ENCODE measurements at regions of chr11 and their contacts with region 1.

Region 1: GRCh38 chr11:8964324-8965320 is at the start of gene TMEM9B:
- DNase-seq: peak; percentile 95
- ATAC-seq: peak; percentile 85
- H3K4me3 Mint-ChIP-seq: peak within 1 kb of the TSS; percentile 94
- H3K27ac Mint-ChIP-seq: peak within 1 kb of the TSS; percentile 91
- H3K4me1 Mint-ChIP-seq: peaks cover 25% of the 10 kb centered on the region
- H3K27me3 Mint-ChIP-seq: no peaks in the 10 kb centered on the region
- CTCF ChIP-seq: no peak
- total RNA-seq, gene TMEM9B: 14.6 to 16.3 TPM

Region 2: DNA sequence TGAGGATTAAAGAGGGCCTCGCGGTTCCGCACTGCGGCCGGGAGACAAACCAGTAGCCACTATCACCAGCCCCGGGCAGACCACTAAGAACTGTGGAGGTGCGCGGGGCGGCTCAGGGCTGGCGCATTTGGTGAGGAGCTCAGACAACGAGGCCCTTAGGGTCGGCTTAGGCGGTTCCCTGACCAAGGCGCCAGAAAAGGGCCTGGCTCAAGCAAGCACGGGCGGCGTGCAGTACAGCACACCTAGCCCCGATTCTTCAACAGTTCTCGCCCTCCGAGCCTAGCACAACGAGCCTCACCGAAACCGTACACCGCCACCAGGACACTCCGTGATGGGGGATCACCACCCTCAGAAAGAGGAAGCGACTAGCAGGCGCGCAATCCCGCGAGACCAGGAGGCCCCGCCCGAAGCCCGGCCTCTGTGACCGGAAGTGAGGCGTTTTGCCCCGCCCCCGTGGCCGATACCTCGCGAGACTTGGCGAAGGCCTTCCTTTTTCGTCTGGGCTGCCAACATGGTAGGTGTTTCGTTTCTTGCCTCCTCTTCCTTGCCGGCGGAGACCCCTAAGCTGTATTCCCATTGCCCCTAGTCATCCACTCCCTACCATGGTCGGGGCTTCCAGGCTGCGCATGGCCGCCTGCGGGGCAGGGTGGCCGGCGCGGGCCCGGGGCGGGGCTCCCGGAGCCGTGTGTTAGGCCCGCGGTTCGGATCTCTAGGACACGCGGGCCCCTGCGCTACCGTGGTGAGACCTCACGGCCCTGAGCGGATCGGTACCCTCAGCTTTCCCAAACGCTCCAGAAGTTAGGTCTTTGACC is 282.1 kb before region 1 on chr11 and contains the starts of genes RPL27A and TRIM66:
- CTCF ChIA-PET with region 1: interaction called, 3 read pairs
- POLR2A ChIA-PET with region 1: interaction called, 16 read pairs
- intact Hi-C with region 1: loop called (anchors 5 kb)
- DNase-seq: peak; percentile 99
- ATAC-seq: peak; percentile 96
- H3K4me3 Mint-ChIP-seq: peak within 1 kb of the TSS; percentile 93
- H3K27ac Mint-ChIP-seq: peak within 1 kb of the TSS; percentile 97
- H3K4me1 Mint-ChIP-seq: peaks cover 41% of the 10 kb centered on the region
- H3K27me3 Mint-ChIP-seq: no peaks in the 10 kb centered on the region
- CTCF ChIP-seq: no peak
- total RNA-seq, gene RPL27A: 959 to 987 TPM
- total RNA-seq, gene TRIM66: 24.7 to 28.4 TPM

Region 3: GRCh38 chr11:8688414-8689362 is 275.9 kb before region 1 on chr11:
- CTCF ChIA-PET with region 1: interaction called, 5 read pairs
- POLR2A ChIA-PET with region 1: interaction called, 16 read pairs
- intact Hi-C with region 1: loop called (anchors 5 kb)
- DNase-seq: peak; percentile 91
- ATAC-seq: peak; percentile 91
- H3K4me3 Mint-ChIP-seq: peak overlapping the region; percentile 93
- H3K27ac Mint-ChIP-seq: peak overlapping the region; percentile 97
- H3K4me1 Mint-ChIP-seq: peaks cover 45% of the 10 kb centered on the region
- H3K27me3 Mint-ChIP-seq: no peaks in the 10 kb centered on the region
- CTCF ChIP-seq: no peak

Region 4: GRCh38 chr11:8744423-8744822 is 220.2 kb before region 1 on chr11:
- CTCF ChIA-PET with region 1: no interaction called
- POLR2A ChIA-PET with region 1: no interaction called
- intact Hi-C with region 1: no loop called
- DNase-seq: peak; percentile 6
- ATAC-seq: peak; percentile 83
- H3K4me3 Mint-ChIP-seq: no peak overlapping the region
- H3K27ac Mint-ChIP-seq: no peak overlapping the region
- H3K4me1 Mint-ChIP-seq: peaks cover 5% of the 10 kb centered on the region
- H3K27me3 Mint-ChIP-seq: peaks cover 13% of the 10 kb centered on the region
- CTCF ChIP-seq: no peak

Region 5: GRCh38 chr11:8911029-8911826 is 53.4 kb before region 1 on chr11 and contains the start of gene AKIP1:
- CTCF ChIA-PET with region 1: interaction called, 43 read pairs
- POLR2A ChIA-PET with region 1: interaction called, 6 read pairs
- intact Hi-C with region 1: loop called (anchors 5 kb)
- DNase-seq: peak; percentile 90
- ATAC-seq: peak; percentile 80
- H3K4me3 Mint-ChIP-seq: peak within 1 kb of the TSS; percentile 84
- H3K27ac Mint-ChIP-seq: peak within 1 kb of the TSS; percentile 88
- H3K4me1 Mint-ChIP-seq: peaks cover 42% of the 10 kb centered on the region
- H3K27me3 Mint-ChIP-seq: no peaks in the 10 kb centered on the region
- CTCF ChIP-seq: no peak
- total RNA-seq, gene AKIP1: 27.8 to 28.2 TPM

Region 6: DNA sequence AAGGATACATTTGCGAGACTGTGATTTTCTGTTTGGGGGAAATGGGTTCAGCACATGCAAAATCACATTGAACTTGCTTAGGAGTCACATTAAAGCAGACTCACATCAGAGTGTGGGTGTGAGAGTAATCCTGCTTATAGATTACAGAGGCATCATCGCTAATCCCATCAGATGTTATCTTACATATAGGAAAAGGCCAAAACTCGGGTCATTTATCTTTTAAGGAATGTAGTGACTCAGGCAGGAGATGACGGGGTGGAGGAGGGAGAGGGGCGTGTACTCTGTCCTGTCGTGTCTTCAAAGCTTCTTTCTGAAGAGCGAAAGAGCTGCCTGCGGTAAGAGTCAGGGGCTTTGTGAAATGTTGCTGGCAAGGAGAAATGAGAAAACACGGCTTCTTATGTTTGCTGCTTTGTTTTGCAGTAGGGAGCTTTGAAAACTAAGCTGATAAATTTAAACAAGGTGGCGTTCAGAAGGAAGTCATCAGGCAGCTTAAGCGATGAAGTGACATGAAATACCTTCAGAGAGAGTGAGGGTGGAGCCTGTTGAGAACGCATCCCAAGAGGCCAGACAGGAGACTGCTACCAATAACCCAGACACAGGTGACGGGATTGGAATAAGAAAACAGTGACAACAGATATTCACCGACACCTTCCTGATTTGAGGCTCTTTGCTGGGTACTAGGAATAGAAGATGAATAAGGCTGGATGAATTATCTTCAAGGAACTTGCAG is 29.7 kb before region 1 on chr11:
- CTCF ChIA-PET with region 1: interaction called, 11 read pairs
- POLR2A ChIA-PET with region 1: no interaction called
- intact Hi-C with region 1: no loop called
- DNase-seq: no peak
- ATAC-seq: no peak
- H3K4me3 Mint-ChIP-seq: no peak overlapping the region
- H3K27ac Mint-ChIP-seq: no peak overlapping the region
- H3K4me1 Mint-ChIP-seq: peaks cover 3% of the 10 kb centered on the region
- H3K27me3 Mint-ChIP-seq: no peaks in the 10 kb centered on the region
- CTCF ChIP-seq: no peak

Region 7: GRCh38 chr11:8948886-8949285 is 15.7 kb before region 1 on chr11:
- CTCF ChIA-PET with region 1: interaction called, 33 read pairs
- POLR2A ChIA-PET with region 1: no interaction called
- intact Hi-C with region 1: no loop called
- DNase-seq: no peak
- ATAC-seq: no peak
- H3K4me3 Mint-ChIP-seq: no peak overlapping the region
- H3K27ac Mint-ChIP-seq: no peak overlapping the region
- H3K4me1 Mint-ChIP-seq: no peaks in the 10 kb centered on the region
- H3K27me3 Mint-ChIP-seq: peaks cover 1% of the 10 kb centered on the region
- CTCF ChIP-seq: no peak

Region 8: GRCh38 chr11:8989453-8989852 is 24.8 kb after region 1 on chr11:
- CTCF ChIA-PET with region 1: no interaction called
- POLR2A ChIA-PET with region 1: no interaction called
- intact Hi-C with region 1: no loop called
- DNase-seq: no peak
- ATAC-seq: no peak
- H3K4me3 Mint-ChIP-seq: no peak overlapping the region
- H3K27ac Mint-ChIP-seq: no peak overlapping the region
- H3K4me1 Mint-ChIP-seq: no peaks in the 10 kb centered on the region
- H3K27me3 Mint-ChIP-seq: peaks cover 11% of the 10 kb centered on the region
- CTCF ChIP-seq: no peak

Region 9: DNA sequence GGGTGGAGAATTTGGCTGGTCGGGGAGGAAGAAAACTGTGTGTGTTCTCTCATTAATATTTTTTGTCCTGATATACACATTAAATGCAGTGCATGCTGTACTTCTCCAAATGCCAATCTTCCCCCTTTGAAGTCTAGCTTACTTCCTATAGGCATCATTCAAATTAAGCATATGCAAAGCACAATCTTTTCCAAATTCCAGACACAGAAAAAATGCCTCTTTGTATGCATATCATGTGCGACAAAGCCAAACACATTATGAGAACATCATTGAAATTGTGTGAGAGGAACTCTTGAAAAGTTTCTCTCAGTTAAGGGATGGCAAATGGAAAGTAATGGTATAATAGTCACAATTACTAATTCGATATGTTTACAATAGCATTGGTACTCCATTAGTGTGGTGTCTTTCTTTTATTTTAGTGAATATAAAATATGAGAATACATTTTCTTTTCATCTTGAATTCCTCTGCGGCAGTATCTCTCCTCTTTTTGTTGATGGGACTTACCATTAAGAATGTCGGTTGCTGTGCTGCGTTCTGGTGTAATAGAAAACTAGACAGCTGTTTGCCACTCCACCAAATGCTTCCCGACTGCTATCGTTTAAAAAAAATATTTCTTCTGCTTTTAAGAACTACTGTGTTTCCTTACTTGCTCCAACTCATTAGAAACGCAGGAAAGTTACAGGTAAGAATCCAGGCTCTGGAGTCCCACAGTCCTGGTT is 58.5 kb after region 1 on chr11:
- CTCF ChIA-PET with region 1: no interaction called
- POLR2A ChIA-PET with region 1: no interaction called
- intact Hi-C with region 1: no loop called
- DNase-seq: no peak
- ATAC-seq: no peak
- H3K4me3 Mint-ChIP-seq: no peak overlapping the region
- H3K27ac Mint-ChIP-seq: no peak overlapping the region
- H3K4me1 Mint-ChIP-seq: peaks cover 2% of the 10 kb centered on the region
- H3K27me3 Mint-ChIP-seq: peaks cover 4% of the 10 kb centered on the region
- CTCF ChIP-seq: no peak

Measured in activated CD8-positive, alpha-beta T cell treated with anti-CD3 and anti-CD28 coated beads for 36 hours (primary cell).